GM12878 (cell line): ENCODE measurements at regions of chr17 and their contacts with region 1.

Region 1: GRCh38 chr17:35531160-35531559 is 6.3 kb downstream of the SLFN12L start:
- DNase-seq: no peak
- ATAC-seq: no peak
- H3K4me3 ChIP-seq: no peak overlapping the region
- H3K27ac ChIP-seq: no peak overlapping the region
- H3K4me1 ChIP-seq: peaks cover 4% of the 10 kb centered on the region; the same call in 1 of the 2 replicates
- H3K27me3 ChIP-seq: no peaks in the 10 kb centered on the region
- CTCF ChIP-seq: no peak
- EP300 ChIP-seq: no peak
- POLR2A ChIP-seq: no peak
- RAD21 ChIP-seq: no peak

Region 2: DNA sequence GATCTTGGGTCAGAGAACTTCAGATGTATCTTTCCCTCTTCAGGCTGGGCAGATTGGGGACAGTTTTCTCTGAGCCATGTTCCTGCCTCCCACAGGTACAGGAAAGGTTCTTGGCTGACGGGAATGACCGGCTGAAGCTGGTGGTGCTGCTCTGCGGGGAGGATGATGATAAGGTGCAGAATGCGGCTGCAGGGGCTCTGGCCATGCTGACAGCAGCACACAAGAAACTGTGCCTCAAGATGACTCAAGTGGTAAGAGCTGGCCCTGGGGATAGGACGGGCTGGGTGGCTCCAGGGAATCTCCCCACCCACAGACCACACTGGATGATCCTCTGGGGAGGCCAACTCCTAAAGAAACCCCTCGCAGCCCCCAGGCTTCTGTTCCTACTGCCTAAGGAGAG is 347.8 kb before region 1 on chr17:
- CTCF ChIA-PET with region 1: no interaction called
- POLR2A ChIA-PET with region 1: no interaction called
- RAD21 ChIA-PET with region 1: no interaction called
- SMC1A ChIA-PET with region 1: no interaction called
- in situ Hi-C with region 1: no loop called
- intact Hi-C with region 1: no loop called
- DNase-seq: no peak
- ATAC-seq: peak; percentile 50
- H3K4me3 ChIP-seq: no peak overlapping the region
- H3K27ac ChIP-seq: no peak overlapping the region
- H3K4me1 ChIP-seq: no peaks in the 10 kb centered on the region
- H3K27me3 ChIP-seq: no peaks in the 10 kb centered on the region; a peak in 1 of 4 replicates
- CTCF ChIP-seq: no peak
- EP300 ChIP-seq: no peak
- POLR2A ChIP-seq: no peak
- RAD21 ChIP-seq: no peak

Region 3: DNA sequence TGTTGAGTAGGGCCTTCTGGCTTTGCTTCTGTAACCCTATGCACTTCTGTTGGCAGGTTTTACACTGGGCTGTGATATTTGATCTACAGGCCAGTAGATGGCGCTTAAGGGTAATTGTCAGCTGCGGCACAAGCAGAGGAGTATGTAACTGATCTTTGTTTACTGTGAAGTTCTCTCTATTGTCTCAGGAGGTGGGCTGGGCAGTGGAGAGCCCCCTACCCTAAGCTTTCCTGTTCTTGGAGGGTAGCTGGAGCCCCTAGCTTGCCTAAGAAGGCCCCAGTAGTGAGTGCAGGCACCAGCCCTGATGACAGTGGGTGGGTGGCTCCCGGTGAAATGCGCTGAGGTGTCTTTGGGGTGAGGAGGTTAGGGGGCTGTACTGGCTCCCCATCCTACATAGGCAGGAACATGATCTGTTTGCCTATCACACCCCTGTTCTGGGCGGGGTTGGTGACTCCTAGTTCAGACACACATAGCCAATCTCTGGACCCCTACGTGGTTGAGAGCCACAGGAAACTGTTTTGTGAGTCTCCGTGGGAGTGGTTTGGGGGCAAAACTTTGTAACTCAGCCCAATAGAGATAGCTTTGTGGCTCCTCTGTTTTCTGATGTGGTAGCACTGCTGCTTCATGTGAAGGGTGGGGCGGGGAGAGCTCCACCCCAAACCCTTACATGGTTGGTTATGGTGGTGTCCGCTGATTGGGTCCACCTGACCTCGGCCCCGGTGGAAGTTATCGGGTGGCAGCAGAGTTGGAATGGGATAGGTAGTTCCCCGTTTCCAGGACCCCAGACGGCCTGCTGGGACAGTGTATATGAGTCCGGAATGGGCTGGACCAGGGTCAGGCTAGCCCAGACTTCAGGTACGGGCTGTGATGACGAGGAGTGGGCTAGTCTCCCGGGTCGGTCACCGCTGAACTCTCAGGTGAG is 218.1 kb before region 1 on chr17:
- CTCF ChIA-PET with region 1: interaction called, 321 read pairs
- POLR2A ChIA-PET with region 1: interaction called, 8 read pairs
- RAD21 ChIA-PET with region 1: interaction called, 171 read pairs
- SMC1A ChIA-PET with region 1: interaction called, 251 read pairs
- in situ Hi-C with region 1: loop called (anchors 5 kb)
- intact Hi-C with region 1: loop called (anchors 1 kb)
- DNase-seq: peak; percentile 43
- ATAC-seq: peak; percentile 97
- H3K4me3 ChIP-seq: peak overlapping the region; percentile 52
- H3K27ac ChIP-seq: no peak overlapping the region
- H3K4me1 ChIP-seq: peaks cover 9% of the 10 kb centered on the region
- H3K27me3 ChIP-seq: no peaks in the 10 kb centered on the region
- CTCF ChIP-seq: peak; percentile 77 to 82 (median 78)
- EP300 ChIP-seq: no peak
- POLR2A ChIP-seq: no peak
- RAD21 ChIP-seq: peak; percentile 92

Region 4: GRCh38 chr17:35432176-35433074 is 98.7 kb before region 1 on chr17 and contains the start of gene SLFN12:
- CTCF ChIA-PET with region 1: interaction called, 6 read pairs
- POLR2A ChIA-PET with region 1: no interaction called
- RAD21 ChIA-PET with region 1: interaction called, 11 read pairs
- SMC1A ChIA-PET with region 1: interaction called, 4 read pairs
- in situ Hi-C with region 1: no loop called
- intact Hi-C with region 1: loop called (anchors 5 kb)
- DNase-seq: peak; percentile 67
- ATAC-seq: peak; percentile 94
- H3K4me3 ChIP-seq: peak within 1 kb of the TSS; percentile 82
- H3K27ac ChIP-seq: peak within 1 kb of the TSS; percentile 90
- H3K4me1 ChIP-seq: peaks cover 16% of the 10 kb centered on the region
- H3K27me3 ChIP-seq: no peaks in the 10 kb centered on the region
- CTCF ChIP-seq: no peak
- EP300 ChIP-seq: no peak
- POLR2A ChIP-seq: 0 out of 2 replicates have a peak, but pooled peaks have one; percentile 28
- RAD21 ChIP-seq: no peak
- polyA plus RNA-seq, gene SLFN12: 11.2 to 14.8 TPM

Region 5: GRCh38 chr17:35486920-35487732 is 44.0 kb before region 1 on chr17:
- CTCF ChIA-PET with region 1: interaction called, 18 read pairs
- POLR2A ChIA-PET with region 1: interaction called, 4 read pairs
- RAD21 ChIA-PET with region 1: interaction called, 26 read pairs
- SMC1A ChIA-PET with region 1: interaction called, 23 read pairs
- in situ Hi-C with region 1: no loop called
- intact Hi-C with region 1: no loop called
- DNase-seq: peak; percentile 23
- ATAC-seq: peak; percentile 88
- H3K4me3 ChIP-seq: peak overlapping the region; percentile 66
- H3K27ac ChIP-seq: peak overlapping the region; percentile 43
- H3K4me1 ChIP-seq: peaks cover 12% of the 10 kb centered on the region
- H3K27me3 ChIP-seq: no peaks in the 10 kb centered on the region
- CTCF ChIP-seq: no peak
- EP300 ChIP-seq: no peak
- POLR2A ChIP-seq: 0 out of 2 replicates have a peak, but pooled peaks have one; percentile 23
- RAD21 ChIP-seq: no peak

Region 6: GRCh38 chr17:35764123-35764991 is 233.2 kb after region 1 on chr17:
- CTCF ChIA-PET with region 1: interaction called, 10 read pairs
- POLR2A ChIA-PET with region 1: no interaction called
- RAD21 ChIA-PET with region 1: no interaction called
- SMC1A ChIA-PET with region 1: no interaction called
- in situ Hi-C with region 1: no loop called
- intact Hi-C with region 1: no loop called
- DNase-seq: peak; percentile 49
- ATAC-seq: peak; percentile 98
- H3K4me3 ChIP-seq: peak overlapping the region; percentile 63; the same call in 1 of the 2 replicates
- H3K27ac ChIP-seq: no peak overlapping the region
- H3K4me1 ChIP-seq: peaks cover 5% of the 10 kb centered on the region
- H3K27me3 ChIP-seq: peaks cover 0 to 6% of the 10 kb centered on the region in 2 experiments
- CTCF ChIP-seq: peak; percentile 89 to 98 (median 96)
- EP300 ChIP-seq: no peak
- POLR2A ChIP-seq: no peak
- RAD21 ChIP-seq: peak; percentile 73